Lower leg skin (tissue), 4 donors: ENCODE measurements at regions of chr3 and their contacts with region 1.

Region 1: GRCh38 chr3:54712539-54712938 is 215.3 kb downstream of the LRTM1 start:
- DNase-seq: no peak
- H3K4me3 ChIP-seq: no peak overlapping the region
- CTCF ChIP-seq: no peak
- POLR2A ChIP-seq: no peak

Region 2: GRCh38 chr3:55445551-55445950 is 733.0 kb after region 1 on chr3:
- intact Hi-C with region 1: no loop called
- DNase-seq: no peak
- H3K4me3 ChIP-seq: no peak overlapping the region
- CTCF ChIP-seq: no peak
- POLR2A ChIP-seq: no peak

Region 3: GRCh38 chr3:56347219-56347871 is 1634.8 kb after region 1 on chr3:
- intact Hi-C with region 1: loop called (anchors 5 kb)
- DNase-seq: no peak
- H3K4me3 ChIP-seq: no peak overlapping the region
- CTCF ChIP-seq: no peak
- POLR2A ChIP-seq: no peak